ENCODE measurements at regions of chr17 and their contacts with region 1.

Region 1: DNA sequence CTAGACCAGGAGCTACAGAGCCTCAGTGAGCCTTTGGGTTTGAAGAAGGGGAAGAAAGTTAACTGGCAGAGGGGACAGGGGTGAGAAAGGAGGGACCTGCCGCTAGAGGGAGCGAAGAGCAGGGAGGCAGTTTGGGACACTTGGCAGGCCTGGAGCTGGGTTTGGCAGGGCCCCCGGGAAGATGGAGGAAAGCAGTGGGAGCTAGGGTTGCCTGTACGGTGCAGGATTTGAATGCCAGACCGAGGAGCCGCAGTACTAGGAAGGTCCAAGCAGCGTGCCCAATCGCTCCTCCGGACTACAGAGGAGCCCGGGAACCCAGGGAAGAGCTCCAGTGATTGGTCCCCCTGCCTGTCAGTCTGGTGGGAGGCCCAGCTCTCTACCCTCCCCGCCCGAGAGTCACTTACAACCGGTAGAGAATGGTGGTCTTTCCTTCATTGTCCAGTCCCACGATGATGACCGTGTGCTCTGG is 1.3 kb downstream of the ARL5C start:
- H3K4me3 ChIP-seq: no peak overlapping the region
- H3K27ac ChIP-seq: no peak overlapping the region
- H3K4me1 ChIP-seq: 0 out of 2 replicates have a peak, but pooled peaks cover 4% of the 10 kb centered on the region
- CTCF ChIP-seq: peak; percentile 90

Region 2: DNA sequence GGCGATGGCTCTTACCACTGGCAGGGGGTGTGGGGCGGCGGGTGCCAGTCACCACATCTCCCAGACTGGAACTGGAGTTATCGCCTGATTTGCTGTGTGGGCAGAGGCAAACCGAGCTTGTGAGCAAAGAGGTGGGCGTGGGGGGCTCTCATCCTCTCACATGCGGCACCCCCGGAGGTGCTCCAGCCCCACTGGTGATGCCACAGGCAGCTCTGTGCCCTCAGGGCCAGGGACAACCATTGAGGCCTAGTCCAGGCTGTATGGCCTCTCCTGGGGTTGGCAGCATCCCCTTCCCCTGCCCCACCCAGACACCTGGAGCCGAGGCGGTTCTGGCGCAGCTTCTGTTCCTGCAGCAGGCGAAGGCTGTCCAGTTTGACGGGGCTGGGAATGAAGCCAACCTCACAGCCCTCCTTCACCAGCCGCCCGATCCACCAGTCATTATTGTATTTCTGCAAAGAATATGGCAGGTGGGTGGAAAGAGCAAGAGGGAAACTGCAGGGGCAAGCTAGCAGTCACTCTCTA is 21.8 kb after region 1 on chr17:
- CTCF ChIA-PET with region 1: interaction called, 10 read pairs
- POLR2A ChIA-PET with region 1: no interaction called
- H3K4me3 ChIP-seq: no peak overlapping the region
- H3K27ac ChIP-seq: no peak overlapping the region
- H3K4me1 ChIP-seq: no peaks in the 10 kb centered on the region
- CTCF ChIP-seq: no peak

Region 3: GRCh38 chr17:39209317-39210092 is 44.8 kb after region 1 on chr17:
- CTCF ChIA-PET with region 1: interaction called, 13 read pairs
- POLR2A ChIA-PET with region 1: interaction called, 4 read pairs
- H3K4me3 ChIP-seq: peak overlapping the region; percentile 13
- H3K27ac ChIP-seq: peak overlapping the region; percentile 28; the same call in 1 of the 2 replicates
- H3K4me1 ChIP-seq: peaks cover 16% of the 10 kb centered on the region
- CTCF ChIP-seq: no peak

Region 4: GRCh38 chr17:39261286-39261685 is 96.6 kb after region 1 on chr17:
- CTCF ChIA-PET with region 1: no interaction called
- POLR2A ChIA-PET with region 1: no interaction called
- H3K4me3 ChIP-seq: no peak overlapping the region
- H3K27ac ChIP-seq: no peak overlapping the region
- H3K4me1 ChIP-seq: peaks cover 5% of the 10 kb centered on the region; the same call in 1 of the 2 replicates
- CTCF ChIP-seq: peak; percentile 29; the same call in 1 of the 2 replicates

Measured in HEK293 (cell line).